ENCODE measurements at regions of chr3 and their contacts with region 1.

Region 1: DNA sequence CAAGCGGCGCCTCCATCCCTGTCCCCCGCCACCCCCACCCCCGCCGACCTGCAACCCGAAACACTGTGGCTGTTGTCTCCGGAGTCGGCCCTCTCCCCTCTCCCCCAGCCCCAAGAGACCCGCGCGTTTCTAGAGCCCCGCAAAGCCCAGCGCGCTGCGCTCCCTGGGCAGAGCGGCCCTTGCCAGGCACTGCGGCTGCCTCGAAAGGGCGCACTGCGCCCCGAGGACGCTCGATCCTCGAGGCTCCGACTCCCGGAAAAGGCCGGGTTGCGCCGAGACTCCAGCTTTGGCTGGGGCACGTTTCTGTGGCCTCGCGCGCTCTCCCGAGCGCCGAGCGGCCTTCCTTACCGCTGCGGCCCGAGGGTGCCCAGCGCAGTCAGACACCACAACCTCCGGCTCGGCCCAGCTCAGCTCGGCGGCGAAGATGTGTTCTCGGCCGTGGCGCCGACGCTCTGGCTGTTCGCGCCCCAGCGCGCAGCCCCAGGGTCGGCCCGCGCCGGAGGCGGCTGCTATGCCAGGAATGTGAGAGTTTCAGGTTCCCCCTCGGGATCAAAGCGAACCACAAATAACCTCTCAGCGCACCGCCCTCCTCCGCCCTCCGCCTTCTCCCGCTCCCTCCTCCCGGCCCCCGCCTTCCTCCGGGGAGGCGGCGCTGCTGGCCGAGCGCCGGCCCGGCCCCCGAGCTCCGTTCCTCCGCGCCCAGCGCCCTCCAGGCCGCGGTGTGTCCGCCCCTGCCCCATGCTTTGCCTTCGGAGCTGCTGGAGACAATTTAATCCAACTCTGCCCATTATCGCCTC is at the start of gene AMOTL2:
- DNase-seq: peak; percentile 95
- ATAC-seq: peak; percentile 65
- H3K4me3 Mint-ChIP-seq: peak within 1 kb of the TSS; percentile 82
- H3K27ac Mint-ChIP-seq: peak within 1 kb of the TSS; percentile 98
- H3K4me1 Mint-ChIP-seq: peaks cover 70% of the 10 kb centered on the region
- H3K27me3 Mint-ChIP-seq: peaks cover 31% of the 10 kb centered on the region
- CTCF ChIP-seq: no peak
- total RNA-seq, gene AMOTL2: 76.9 to 85.4 TPM (median 79.9 TPM) in 3 replicates

Region 2: DNA sequence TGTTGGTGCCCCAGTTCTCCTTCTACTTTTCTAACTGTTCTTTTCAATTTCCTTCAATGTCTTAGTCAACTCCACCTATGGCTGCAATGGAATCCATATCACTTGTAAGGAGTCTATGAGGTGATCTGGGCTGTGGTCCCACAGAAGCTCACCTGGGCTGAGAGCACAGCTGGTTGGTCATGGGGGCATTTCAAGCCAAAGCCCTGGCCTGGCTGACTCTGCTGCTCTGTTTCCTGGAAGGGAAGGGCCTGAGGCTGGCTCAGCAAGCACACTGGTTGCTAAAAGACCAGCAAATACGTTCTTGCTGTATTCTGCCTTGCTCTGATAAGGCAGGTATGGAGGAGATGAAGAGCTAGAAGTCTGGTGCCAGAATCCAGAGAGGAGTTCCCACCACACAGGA is 29.0 kb before region 1 on chr3:
- CTCF ChIA-PET with region 1: no interaction called
- POLR2A ChIA-PET with region 1: no interaction called
- DNase-seq: no peak
- ATAC-seq: no peak
- H3K4me3 Mint-ChIP-seq: no peak overlapping the region
- H3K27ac Mint-ChIP-seq: no peak overlapping the region
- H3K4me1 Mint-ChIP-seq: peaks cover 4% of the 10 kb centered on the region
- H3K27me3 Mint-ChIP-seq: no peaks in the 10 kb centered on the region; the same call in 1 of the 2 replicates
- CTCF ChIP-seq: no peak

Region 3: DNA sequence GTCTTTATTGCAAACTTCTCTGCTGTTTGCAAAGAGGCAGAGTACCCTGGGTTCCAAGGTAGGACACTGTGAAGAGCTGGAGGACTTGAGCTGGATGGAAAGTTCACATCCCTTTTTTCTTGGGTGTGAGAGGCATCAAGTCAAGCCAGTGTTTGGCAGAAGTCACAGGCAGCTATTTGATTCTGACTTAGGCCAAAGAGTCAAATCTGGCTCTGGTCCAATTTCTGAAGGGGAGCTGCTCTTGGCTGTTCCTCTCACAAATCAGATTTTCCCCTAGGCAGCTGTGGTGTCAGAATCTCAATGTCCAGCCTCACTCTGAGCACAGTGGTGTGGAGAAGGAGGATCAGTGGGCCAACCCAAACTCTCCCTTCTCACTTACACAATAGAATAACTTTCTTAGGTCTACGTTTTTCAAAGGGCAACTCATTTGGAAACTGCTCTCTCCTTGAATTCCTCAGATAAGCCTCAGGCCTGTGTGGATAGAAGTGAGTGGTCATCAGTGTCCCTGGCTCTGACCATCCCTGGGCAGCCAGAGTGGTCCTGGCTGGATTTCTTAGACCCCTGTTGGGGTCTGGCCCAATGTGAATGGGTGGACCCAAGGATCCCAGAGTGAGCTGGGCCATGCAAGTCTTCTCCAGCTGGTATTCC is 18.3 kb after region 1 on chr3:
- CTCF ChIA-PET with region 1: interaction called, 10 read pairs
- POLR2A ChIA-PET with region 1: interaction called, 4 read pairs
- DNase-seq: no peak
- ATAC-seq: no peak
- H3K4me3 Mint-ChIP-seq: no peak overlapping the region
- H3K27ac Mint-ChIP-seq: no peak overlapping the region
- H3K4me1 Mint-ChIP-seq: peaks cover 5% of the 10 kb centered on the region; the same call in 1 of the 2 replicates
- H3K27me3 Mint-ChIP-seq: peaks cover 13% of the 10 kb centered on the region
- CTCF ChIP-seq: no peak

Region 4: GRCh38 chr3:134406331-134407238 is 32.4 kb after region 1 on chr3:
- CTCF ChIA-PET with region 1: no interaction called
- POLR2A ChIA-PET with region 1: interaction called, 16 read pairs
- DNase-seq: peak; percentile 79
- ATAC-seq: peak; percentile 75
- H3K4me3 Mint-ChIP-seq: peak overlapping the region; percentile 62
- H3K27ac Mint-ChIP-seq: peak overlapping the region; percentile 57; the same call in 1 of the 2 replicates
- H3K4me1 Mint-ChIP-seq: peaks cover 56% of the 10 kb centered on the region
- H3K27me3 Mint-ChIP-seq: peaks cover 56% of the 10 kb centered on the region
- CTCF ChIP-seq: no peak

Region 5: DNA sequence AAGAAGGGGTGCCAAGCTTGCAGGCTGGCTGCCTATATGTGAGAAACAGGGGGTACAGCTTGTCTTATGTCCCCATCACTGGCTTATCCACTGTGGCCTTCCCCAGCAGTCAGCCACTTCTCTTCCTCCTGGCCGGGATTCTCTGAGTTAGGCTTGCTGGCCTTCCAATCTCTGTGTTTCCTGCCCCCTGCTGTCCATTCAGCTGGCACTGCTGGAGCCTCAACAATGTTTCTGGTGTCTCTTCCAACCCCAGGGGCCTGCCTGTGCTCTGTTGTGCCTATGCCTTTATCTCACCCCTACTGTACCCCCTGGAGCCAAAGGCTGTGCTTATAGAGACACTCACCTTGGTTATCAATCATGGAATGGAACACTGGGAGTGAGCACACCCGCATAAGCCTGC is 75.1 kb after region 1 on chr3:
- CTCF ChIA-PET with region 1: interaction called, 17 read pairs
- POLR2A ChIA-PET with region 1: interaction called, 7 read pairs
- DNase-seq: peak; percentile 64
- ATAC-seq: peak; percentile 76
- H3K4me3 Mint-ChIP-seq: no peak overlapping the region
- H3K27ac Mint-ChIP-seq: no peak overlapping the region
- H3K4me1 Mint-ChIP-seq: peaks cover 20% of the 10 kb centered on the region
- H3K27me3 Mint-ChIP-seq: peaks cover 23% of the 10 kb centered on the region
- CTCF ChIP-seq: no peak